ENCODE measurements at regions of chr6 and their contacts with region 1.

Region 1: GRCh38 chr6:32971581-32972352 is 3.4 kb downstream of the BRD2 start:
- DNase-seq: peak; percentile 100
- H3K4me3 Mint-ChIP-seq: peak overlapping the region; percentile 98
- H3K27ac Mint-ChIP-seq: peak overlapping the region; percentile 99
- H3K4me1 Mint-ChIP-seq: peaks cover 26% of the 10 kb centered on the region
- H3K27me3 Mint-ChIP-seq: no peaks in the 10 kb centered on the region

Region 2: GRCh38 chr6:31971993-31972708 is 999.6 kb before region 1 on chr6 and contains the start of gene DXO:
- CTCF ChIA-PET with region 1: no interaction called
- POLR2A ChIA-PET with region 1: no interaction called
- intact Hi-C with region 1: loop called (anchors 10 kb)
- DNase-seq: peak; percentile 99
- H3K4me3 Mint-ChIP-seq: peak within 1 kb of the TSS; percentile 95
- H3K27ac Mint-ChIP-seq: peak within 1 kb of the TSS; percentile 100
- H3K4me1 Mint-ChIP-seq: peaks cover 39% of the 10 kb centered on the region
- H3K27me3 Mint-ChIP-seq: no peaks in the 10 kb centered on the region
- total RNA-seq, gene DXO: 10.8 to 12.3 TPM

Region 3: GRCh38 chr6:32843979-32844838 is 127.6 kb before region 1 on chr6 and contains the start of gene PSMB8:
- CTCF ChIA-PET with region 1: interaction called, 20 read pairs
- POLR2A ChIA-PET with region 1: interaction called, 133 read pairs
- intact Hi-C with region 1: loop called (anchors 1 kb)
- DNase-seq: peak; percentile 99
- H3K4me3 Mint-ChIP-seq: peak within 1 kb of the TSS; percentile 97
- H3K27ac Mint-ChIP-seq: peak within 1 kb of the TSS; percentile 100
- H3K4me1 Mint-ChIP-seq: peaks cover 63% of the 10 kb centered on the region
- H3K27me3 Mint-ChIP-seq: no peaks in the 10 kb centered on the region
- total RNA-seq, gene PSMB8: 350 to 370 TPM

Region 4: GRCh38 chr6:32894080-32895005 is 77.4 kb before region 1 on chr6:
- CTCF ChIA-PET with region 1: interaction called, 13 read pairs
- POLR2A ChIA-PET with region 1: interaction called, 43 read pairs
- intact Hi-C with region 1: no loop called
- DNase-seq: peak; percentile 97
- H3K4me3 Mint-ChIP-seq: peak overlapping the region; percentile 98
- H3K27ac Mint-ChIP-seq: peak overlapping the region; percentile 94
- H3K4me1 Mint-ChIP-seq: peaks cover 35% of the 10 kb centered on the region
- H3K27me3 Mint-ChIP-seq: no peaks in the 10 kb centered on the region

Region 5: DNA sequence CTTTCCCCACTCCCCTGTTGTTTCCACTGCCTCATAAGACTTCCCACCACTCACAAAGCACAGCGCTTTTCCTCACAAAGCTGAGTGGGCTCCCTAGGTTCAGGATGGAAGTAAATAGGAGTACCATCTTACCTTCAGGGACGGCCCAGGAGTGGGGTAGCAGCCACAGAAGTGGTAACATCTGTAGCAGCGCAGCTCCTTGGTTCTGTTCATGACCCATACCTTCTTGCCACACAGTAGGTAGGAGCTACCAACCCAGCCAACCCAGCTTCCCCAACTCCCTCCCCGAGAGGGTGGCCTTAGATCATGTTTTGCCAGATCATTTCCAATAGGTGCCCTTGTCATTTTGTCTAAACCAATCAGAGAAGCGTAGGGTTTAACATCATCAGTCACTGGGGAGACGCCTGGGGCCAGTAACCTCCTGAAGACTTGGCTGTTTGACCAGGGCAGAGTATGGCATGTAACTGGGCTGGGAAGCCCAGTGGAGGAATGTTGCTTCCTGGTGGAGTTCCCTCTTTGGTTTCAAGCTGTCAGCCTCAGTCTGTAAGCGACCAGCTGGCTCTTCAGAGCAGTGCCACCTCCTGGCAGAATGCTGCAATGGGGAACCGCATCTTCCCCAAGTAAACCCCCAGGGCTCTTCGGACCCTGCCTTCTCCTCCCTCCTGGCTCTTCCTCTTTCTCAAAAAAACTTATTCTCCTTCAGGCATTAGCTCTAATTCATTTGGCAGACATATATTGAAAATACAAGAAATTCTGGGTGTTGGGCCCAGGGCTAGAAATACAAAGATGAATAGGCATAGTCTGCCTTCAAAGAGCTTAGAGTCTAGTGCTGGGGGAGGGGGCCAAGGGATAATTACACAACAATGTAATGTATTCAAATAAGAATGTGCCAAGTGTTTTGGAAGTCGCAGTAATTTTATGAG is 18.7 kb before region 1 on chr6 and contains the start of gene HLA-DMA:
- CTCF ChIA-PET with region 1: interaction called, 250 read pairs
- POLR2A ChIA-PET with region 1: interaction called, 68 read pairs
- intact Hi-C with region 1: loop called (anchors 1 kb)
- DNase-seq: peak; percentile 83
- H3K4me3 Mint-ChIP-seq: peak within 1 kb of the TSS; percentile 64
- H3K27ac Mint-ChIP-seq: peak within 1 kb of the TSS; percentile 39
- H3K4me1 Mint-ChIP-seq: peaks cover 51% of the 10 kb centered on the region
- H3K27me3 Mint-ChIP-seq: no peaks in the 10 kb centered on the region
- total RNA-seq, gene HLA-DMA: 9.6 to 10.2 TPM

Region 6: DNA sequence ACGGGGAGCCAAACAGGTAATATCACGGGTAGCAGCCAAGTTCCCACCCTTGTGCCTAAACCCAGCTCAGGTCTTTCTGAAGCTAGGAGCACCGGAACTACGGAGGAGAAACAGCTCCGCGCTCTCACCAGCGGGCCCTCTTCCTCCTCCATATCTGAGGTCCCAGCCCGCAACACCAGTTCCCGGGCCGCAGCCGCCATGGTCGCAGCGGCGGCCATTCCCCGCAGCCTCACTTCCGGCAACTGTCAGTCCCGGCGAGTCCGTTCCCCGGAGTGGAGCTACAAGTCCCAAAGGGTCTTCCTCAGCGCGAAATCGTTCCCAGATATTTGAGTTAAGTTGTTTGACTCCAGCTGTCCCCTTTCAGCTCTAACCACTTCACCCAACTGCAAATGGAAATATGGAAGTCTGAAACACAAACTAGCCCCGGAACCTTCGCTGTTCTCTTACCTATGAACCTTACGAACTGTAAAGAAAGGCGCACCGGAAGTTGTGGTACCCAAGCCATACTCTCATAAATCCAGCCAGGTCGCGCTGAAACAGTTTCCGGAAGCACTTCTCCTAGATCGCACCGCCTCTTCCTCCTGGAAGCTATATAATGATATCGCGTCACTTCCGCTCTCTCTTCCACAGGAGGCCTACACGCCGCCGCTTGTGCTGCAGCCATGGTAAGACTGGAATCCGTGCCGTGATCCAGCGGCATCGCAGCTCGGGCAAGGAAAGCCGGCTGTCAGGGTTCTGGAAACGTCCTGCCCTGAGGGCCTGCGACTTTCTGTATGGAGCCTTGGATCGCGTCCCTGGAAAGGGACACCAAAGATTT is 299.9 kb after region 1 on chr6 and contains the starts of genes RPS18 and VPS52:
- CTCF ChIA-PET with region 1: no interaction called
- POLR2A ChIA-PET with region 1: interaction called, 17 read pairs
- intact Hi-C with region 1: loop called (anchors 5 kb)
- DNase-seq: peak; percentile 94
- H3K4me3 Mint-ChIP-seq: peak within 1 kb of the TSS; percentile 94
- H3K27ac Mint-ChIP-seq: peak within 1 kb of the TSS; percentile 98
- H3K4me1 Mint-ChIP-seq: peaks cover 42% of the 10 kb centered on the region
- H3K27me3 Mint-ChIP-seq: no peaks in the 10 kb centered on the region
- total RNA-seq, gene RPS18: 4,372 to 4,391 TPM
- total RNA-seq, gene VPS52: 32.7 to 33.7 TPM

Measured in activated CD4-positive, alpha-beta memory T cell treated with anti-CD3 and anti-CD28 coated beads for 36 hours (primary cell).